Activated B cell treated with CpG ODN at 0.5 μM for 24 hours (primary cell): ENCODE measurements at regions of chr6 and their contacts with region 1.

Region 1: DNA sequence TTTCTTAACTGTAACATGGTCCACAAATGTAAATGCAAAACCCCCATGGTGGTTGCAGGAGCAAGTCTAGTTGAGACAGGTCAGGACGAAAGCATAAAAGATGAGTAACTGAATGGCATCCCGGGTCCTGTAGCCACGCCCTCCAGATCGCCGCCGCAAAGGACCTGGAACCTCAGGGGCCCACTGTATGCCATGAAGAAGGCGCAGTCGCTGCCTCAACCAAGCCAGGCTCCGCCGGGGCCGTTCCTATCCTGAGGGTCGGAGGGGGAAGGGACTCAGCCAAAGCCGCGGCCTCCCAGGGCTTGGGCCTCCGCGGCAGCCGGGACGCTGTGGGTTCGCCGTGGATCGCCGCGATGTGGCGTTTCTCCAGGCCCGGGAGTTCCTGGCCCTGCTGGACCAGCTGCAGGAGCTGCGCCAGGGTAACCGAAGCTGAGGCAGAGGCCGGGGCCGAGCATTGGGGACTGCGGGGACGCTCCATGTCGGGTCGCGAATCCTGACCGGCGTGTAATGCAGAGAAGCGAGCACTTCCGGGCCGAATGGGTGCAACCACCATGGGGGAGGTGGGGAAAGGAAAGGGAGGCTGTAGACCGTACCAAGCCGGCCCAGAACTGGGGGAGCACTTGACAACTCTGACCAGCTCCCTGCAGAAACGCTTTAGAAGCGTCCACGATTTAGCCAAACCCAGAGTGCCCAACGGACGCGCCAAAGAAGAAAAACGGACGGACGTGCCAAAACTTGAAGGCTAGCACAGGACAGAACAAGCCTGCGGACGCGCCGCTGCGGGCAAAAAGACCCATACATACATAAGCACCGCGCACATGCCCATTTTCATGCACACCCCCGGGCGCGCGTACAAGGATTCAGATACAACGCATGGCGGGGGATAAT is 11.1 kb downstream of the RPL7L1 start:
- DNase-seq: peak; percentile 76
- ATAC-seq: peak; percentile 97
- H3K4me3 Mint-ChIP-seq: peak overlapping the region; percentile 97
- H3K27ac Mint-ChIP-seq: peak overlapping the region; percentile 93
- H3K4me1 Mint-ChIP-seq: peaks cover 44% of the 10 kb centered on the region
- H3K27me3 Mint-ChIP-seq: no peaks in the 10 kb centered on the region
- CTCF ChIP-seq: no peak

Region 2: GRCh38 chr6:42217519-42218367 is 672.8 kb before region 1 on chr6 and contains the start of gene MRPS10:
- CTCF ChIA-PET with region 1: no interaction called
- POLR2A ChIA-PET with region 1: no interaction called
- intact Hi-C with region 1: loop called (anchors 5 kb)
- DNase-seq: peak; percentile 76
- ATAC-seq: peak; percentile 99
- H3K4me3 Mint-ChIP-seq: peak within 1 kb of the TSS; percentile 99
- H3K27ac Mint-ChIP-seq: peak within 1 kb of the TSS; percentile 95
- H3K4me1 Mint-ChIP-seq: peaks cover 30% of the 10 kb centered on the region
- H3K27me3 Mint-ChIP-seq: no peaks in the 10 kb centered on the region
- CTCF ChIP-seq: no peak
- total RNA-seq, gene MRPS10: 35.7 and 37.0 TPM in 2 replicates

Region 3: GRCh38 chr6:42374018-42374659 is 516.4 kb before region 1 on chr6:
- CTCF ChIA-PET with region 1: no interaction called
- POLR2A ChIA-PET with region 1: interaction called, 14 read pairs
- intact Hi-C with region 1: no loop called
- DNase-seq: no peak
- ATAC-seq: peak; percentile 52
- H3K4me3 Mint-ChIP-seq: no peak overlapping the region
- H3K27ac Mint-ChIP-seq: no peak overlapping the region
- H3K4me1 Mint-ChIP-seq: peaks cover 34% of the 10 kb centered on the region
- H3K27me3 Mint-ChIP-seq: no peaks in the 10 kb centered on the region
- CTCF ChIP-seq: no peak

Region 4: DNA sequence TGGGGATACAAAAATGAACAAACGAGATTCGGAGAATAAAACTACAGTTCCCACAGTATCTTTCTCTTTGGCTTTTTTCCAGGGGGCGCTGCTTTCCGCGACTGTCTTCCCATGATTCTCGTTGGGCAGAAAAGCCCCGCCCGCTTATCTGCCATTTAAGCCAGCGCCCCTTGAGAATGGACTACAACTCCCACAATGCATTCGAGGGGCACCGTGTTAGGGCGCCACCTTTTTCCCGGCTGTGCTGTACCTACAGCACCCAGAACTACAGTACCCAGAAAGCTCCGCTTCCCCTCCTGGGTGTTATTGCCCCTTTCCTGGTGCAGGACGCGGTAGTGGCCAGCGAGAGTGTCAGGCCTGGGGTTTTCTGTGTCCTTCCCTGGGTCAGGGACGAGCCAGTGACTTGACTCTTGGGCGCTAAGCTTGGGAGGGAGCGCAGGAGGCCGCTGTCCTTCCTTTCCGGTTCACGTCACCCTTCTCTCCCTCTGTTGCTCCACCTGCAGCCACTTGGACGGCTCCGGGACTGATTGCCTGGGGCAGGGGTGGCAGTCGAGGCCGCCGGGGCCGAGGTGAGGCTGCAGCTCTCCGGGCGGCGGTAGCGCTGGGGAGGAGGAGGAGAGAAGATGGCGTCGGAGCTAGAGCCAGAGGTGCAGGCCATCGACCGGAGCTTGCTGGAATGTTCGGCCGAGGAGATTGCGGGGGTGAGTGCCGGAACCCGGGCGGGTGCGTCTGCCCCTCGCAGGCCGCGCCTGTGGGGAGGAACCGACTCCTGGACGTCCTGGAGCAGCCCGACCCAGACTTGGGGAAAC is 326.7 kb before region 1 on chr6 and contains the start of gene UBR2:
- CTCF ChIA-PET with region 1: no interaction called
- POLR2A ChIA-PET with region 1: interaction called, 3 read pairs
- intact Hi-C with region 1: loop called (anchors 5 kb)
- DNase-seq: peak; percentile 73
- ATAC-seq: peak; percentile 96
- H3K4me3 Mint-ChIP-seq: peak within 1 kb of the TSS; percentile 92
- H3K27ac Mint-ChIP-seq: peak within 1 kb of the TSS; percentile 92
- H3K4me1 Mint-ChIP-seq: peaks cover 43% of the 10 kb centered on the region
- H3K27me3 Mint-ChIP-seq: no peaks in the 10 kb centered on the region
- CTCF ChIP-seq: no peak
- total RNA-seq, gene UBR2: 34.3 and 40.8 TPM in 2 replicates

Region 5: DNA sequence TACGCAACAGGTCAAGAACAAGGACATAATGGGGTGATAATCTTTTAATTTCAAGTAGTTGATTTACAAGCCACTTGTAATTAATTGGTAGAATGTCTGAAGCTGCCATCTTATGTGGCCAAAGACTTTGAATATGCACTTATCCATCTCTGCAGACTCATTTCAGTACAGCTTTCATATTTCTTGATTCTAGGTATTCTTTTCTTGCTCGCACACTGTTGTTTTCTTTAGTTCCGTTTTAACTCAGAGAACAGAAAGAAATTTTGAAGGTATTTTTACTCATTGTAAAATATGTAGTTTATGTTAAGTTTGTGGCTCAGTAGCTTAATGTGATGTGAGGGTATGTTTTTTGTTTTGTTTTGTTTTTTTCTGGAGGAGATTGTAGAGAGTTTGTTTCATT is 252.9 kb before region 1 on chr6:
- CTCF ChIA-PET with region 1: no interaction called
- POLR2A ChIA-PET with region 1: interaction called, 11 read pairs
- intact Hi-C with region 1: no loop called
- DNase-seq: no peak
- ATAC-seq: no peak
- H3K4me3 Mint-ChIP-seq: no peak overlapping the region
- H3K27ac Mint-ChIP-seq: no peak overlapping the region
- H3K4me1 Mint-ChIP-seq: no peaks in the 10 kb centered on the region
- H3K27me3 Mint-ChIP-seq: no peaks in the 10 kb centered on the region
- CTCF ChIP-seq: no peak

Region 6: GRCh38 chr6:42661540-42662153 is 228.9 kb before region 1 on chr6:
- CTCF ChIA-PET with region 1: no interaction called
- POLR2A ChIA-PET with region 1: no interaction called
- intact Hi-C with region 1: loop called (anchors 1 kb)
- DNase-seq: peak; percentile 65
- ATAC-seq: peak; percentile 96
- H3K4me3 Mint-ChIP-seq: no peak overlapping the region
- H3K27ac Mint-ChIP-seq: no peak overlapping the region
- H3K4me1 Mint-ChIP-seq: no peaks in the 10 kb centered on the region
- H3K27me3 Mint-ChIP-seq: no peaks in the 10 kb centered on the region
- CTCF ChIP-seq: peak; percentile 74

Region 7: GRCh38 chr6:43516697-43517504 is 626.3 kb after region 1 on chr6 and contains the starts of genes POLR1C and YIPF3:
- CTCF ChIA-PET with region 1: no interaction called
- POLR2A ChIA-PET with region 1: no interaction called
- intact Hi-C with region 1: loop called (anchors 10 kb)
- DNase-seq: peak; percentile 87
- ATAC-seq: peak; percentile 94
- H3K4me3 Mint-ChIP-seq: no peak within 1 kb of the TSS
- H3K27ac Mint-ChIP-seq: peak within 1 kb of the TSS; percentile 54
- H3K4me1 Mint-ChIP-seq: peaks cover 29% of the 10 kb centered on the region
- H3K27me3 Mint-ChIP-seq: no peaks in the 10 kb centered on the region
- CTCF ChIP-seq: no peak
- total RNA-seq, gene POLR1C: 67.7 and 75.6 TPM in 2 replicates
- total RNA-seq, gene YIPF3: 51.7 and 59.1 TPM in 2 replicates